PC-9 (cell line): ENCODE measurements at regions of chr15 and their contacts with region 1.

Region 1: GRCh38 chr15:50653156-50653745 is 33.3 kb downstream of the TRPM7 start:
- DNase-seq: no peak
- H3K4me3 ChIP-seq: no peak overlapping the region
- H3K27ac ChIP-seq: no peak overlapping the region
- H3K4me1 ChIP-seq: no peaks in the 10 kb centered on the region
- H3K27me3 ChIP-seq: no peaks in the 10 kb centered on the region
- CTCF ChIP-seq: no peak

Region 2: DNA sequence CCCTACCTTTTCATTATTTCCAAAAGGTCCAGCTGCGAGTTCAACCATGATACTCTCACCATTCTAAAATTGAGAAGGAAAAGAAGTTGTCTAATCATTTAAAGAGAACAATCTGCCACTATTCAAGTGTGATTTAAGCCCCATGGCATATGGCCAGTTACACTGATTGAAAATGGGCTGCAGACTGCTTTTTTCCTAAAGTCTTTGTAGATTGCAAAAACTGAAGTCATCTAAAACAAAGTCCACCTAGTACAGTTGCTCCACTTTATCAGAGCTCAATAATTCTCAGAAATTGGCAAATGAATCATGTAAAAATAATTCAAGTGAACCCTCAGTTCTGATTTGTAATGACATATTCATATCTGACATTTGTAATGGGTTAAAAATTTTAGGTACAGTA is 73.1 kb after region 1 on chr15:
- CTCF ChIA-PET with region 1: interaction called, 14 read pairs
- POLR2A ChIA-PET with region 1: no interaction called
- intact Hi-C with region 1: no loop called
- DNase-seq: no peak
- H3K4me3 ChIP-seq: no peak overlapping the region
- H3K27ac ChIP-seq: no peak overlapping the region
- H3K4me1 ChIP-seq: no peaks in the 10 kb centered on the region
- H3K27me3 ChIP-seq: no peaks in the 10 kb centered on the region
- CTCF ChIP-seq: no peak